ENCODE measurements at regions of chr22 and their contacts with region 1.

Region 1: DNA sequence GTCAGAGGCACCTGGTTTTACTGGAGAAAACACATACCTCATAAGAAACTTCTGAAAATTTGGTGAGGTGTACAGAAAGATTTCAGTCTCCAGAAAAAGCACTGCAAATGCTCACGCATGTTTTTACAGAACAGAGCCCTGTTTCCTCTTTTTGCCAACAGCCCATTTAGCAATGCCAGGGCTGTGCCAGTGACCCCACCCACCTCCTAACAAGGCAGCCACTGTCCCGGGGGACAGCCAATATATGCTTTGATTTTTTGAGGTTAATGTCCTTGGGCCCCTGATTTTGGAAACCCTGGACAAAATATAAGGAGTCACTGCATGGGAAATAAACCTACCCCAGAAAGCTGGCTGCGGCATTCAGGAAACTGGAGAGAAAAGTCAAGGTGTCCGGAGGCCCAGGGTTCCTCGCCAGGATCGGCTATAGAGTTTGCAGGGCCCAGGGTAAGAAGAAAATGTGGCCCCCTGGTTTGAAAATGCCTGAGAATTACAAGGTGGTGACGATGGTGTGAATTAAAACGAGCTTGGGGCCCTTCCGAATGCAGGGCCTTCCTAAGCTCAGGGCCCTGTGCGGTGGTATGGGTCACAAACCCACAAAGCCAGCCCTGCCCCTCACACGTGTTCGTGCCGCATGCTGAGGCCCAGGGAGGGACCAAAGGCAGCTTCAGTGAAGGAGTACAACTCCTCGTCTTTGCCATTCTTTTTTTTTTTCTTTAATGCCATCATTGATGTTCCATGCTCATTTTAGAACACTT is 71.1 kb upstream of the WNT7B start:
- H3K4me3 Mint-ChIP-seq: peak overlapping the region; percentile 87
- H3K27ac Mint-ChIP-seq: peak overlapping the region; percentile 97
- H3K4me1 Mint-ChIP-seq: peaks cover 84% of the 10 kb centered on the region
- H3K27me3 Mint-ChIP-seq: no peaks in the 10 kb centered on the region

Region 2: GRCh38 chr22:46006379-46007002 is 41.5 kb before region 1 on chr22:
- intact Hi-C with region 1: loop called (anchors 2 kb)
- H3K4me3 Mint-ChIP-seq: peak overlapping the region; percentile 59
- H3K27ac Mint-ChIP-seq: peak overlapping the region; percentile 82
- H3K4me1 Mint-ChIP-seq: peaks cover 67% of the 10 kb centered on the region
- H3K27me3 Mint-ChIP-seq: no peaks in the 10 kb centered on the region